ENCODE measurements at regions of chr6 and their contacts with region 1.

Region 1: GRCh38 chr6:112180095-112180820 is 74.1 kb downstream of the LAMA4 start:
- DNase-seq: peak; percentile 63
- CTCF ChIP-seq: peak; percentile 64

Region 2: GRCh38 chr6:112307707-112308106 is 127.4 kb after region 1 on chr6:
- in situ Hi-C with region 1: loop called (anchors 10 kb)
- DNase-seq: peak; percentile 58
- CTCF ChIP-seq: no peak

Region 3: DNA sequence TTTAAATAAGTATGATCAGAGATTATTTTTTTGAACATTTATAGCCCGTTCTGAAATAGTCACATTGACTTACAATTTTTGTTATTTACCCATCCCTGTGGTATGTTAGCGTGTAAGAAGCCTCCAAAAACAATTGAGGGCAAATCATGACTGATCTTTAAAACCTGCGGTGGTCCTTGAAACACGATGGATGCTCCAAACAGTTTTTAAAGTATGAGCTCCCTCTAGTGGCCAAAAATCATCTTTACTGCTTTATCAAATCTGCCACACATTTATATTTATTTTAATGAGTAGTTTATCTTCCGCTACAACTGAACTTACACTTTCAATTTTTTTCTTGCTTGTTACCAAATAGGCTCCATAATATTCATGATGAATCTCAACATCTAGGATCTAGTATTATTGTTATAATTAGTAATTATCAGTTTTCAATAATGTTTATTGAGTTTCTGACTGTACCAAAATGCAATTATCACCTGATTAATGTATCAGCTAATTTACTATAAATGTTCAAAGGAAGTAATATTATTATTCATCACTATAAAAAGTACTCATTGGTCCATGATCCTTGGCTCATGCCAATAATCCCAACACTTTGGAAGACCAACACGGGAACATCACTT is 1729.1 kb after region 1 on chr6:
- in situ Hi-C with region 1: loop called (anchors 25 kb)
- DNase-seq: peak; percentile 63
- CTCF ChIP-seq: peak; percentile 58

Measured in GM13977 (cell line).